Naive thymus-derived CD4-positive, alpha-beta T cell (primary cell): ENCODE measurements at regions of chr19 and their contacts with region 1.

Region 1: GRCh38 chr19:16283210-16284061 is 41.2 kb upstream of the KLF2 start:
- DNase-seq: peak in 8 of 9 donors; percentile 31 to 77 (median 68)
- ATAC-seq: peak; percentile 75
- H3K4me3 ChIP-seq: peak overlapping the region; percentile 53
- H3K4me3 Mint-ChIP-seq: peak overlapping the region; percentile 61 to 86 (median 84)
- H3K27ac ChIP-seq: peak overlapping the region; percentile 75
- H3K27ac Mint-ChIP-seq: peak overlapping the region; percentile 81 to 98 (median 94)
- H3K4me1 ChIP-seq: peaks cover 9 to 34% of the 10 kb centered on the region in 2 donors
- H3K4me1 Mint-ChIP-seq: peaks cover 31 to 60% (median 51%) of the 10 kb centered on the region in 7 donors
- H3K27me3 ChIP-seq: no peaks in the 10 kb centered on the region
- H3K27me3 Mint-ChIP-seq: peaks cover 0 to 48% (median 0%) of the 10 kb centered on the region in 5 donors

Region 2: GRCh38 chr19:16216744-16217670 is 66.4 kb before region 1 on chr19:
- CTCF ChIA-PET with region 1: no interaction called
- POLR2A ChIA-PET with region 1: no interaction called
- intact Hi-C with region 1: no loop called
- DNase-seq: peak in 7 of 9 donors; percentile 36 to 55 (median 50)
- ATAC-seq: peak; percentile 76
- H3K4me3 ChIP-seq: peak overlapping the region; percentile 34
- H3K4me3 Mint-ChIP-seq: peak overlapping the region; percentile 33 to 85 (median 78)
- H3K27ac ChIP-seq: peak overlapping the region; percentile 57
- H3K27ac Mint-ChIP-seq: peak overlapping the region; percentile 52 to 97 (median 92)
- H3K4me1 ChIP-seq: peaks cover 0 to 44% of the 10 kb centered on the region in 2 donors
- H3K4me1 Mint-ChIP-seq: peaks cover 29 to 68% (median 56%) of the 10 kb centered on the region in 7 donors
- H3K27me3 ChIP-seq: no peaks in the 10 kb centered on the region
- H3K27me3 Mint-ChIP-seq: no peaks in the 10 kb centered on the region

Region 3: GRCh38 chr19:16297575-16298178 is 14.2 kb after region 1 on chr19:
- CTCF ChIA-PET with region 1: no interaction called
- POLR2A ChIA-PET with region 1: interaction called, 5 read pairs
- intact Hi-C with region 1: loop called in 1 of 2 experiments (anchors 2 kb)
- DNase-seq: no peak
- ATAC-seq: no peak
- H3K4me3 ChIP-seq: no peak overlapping the region
- H3K4me3 Mint-ChIP-seq: no peak overlapping the region
- H3K27ac ChIP-seq: no peak overlapping the region
- H3K27ac Mint-ChIP-seq: no peak overlapping the region
- H3K4me1 ChIP-seq: no peaks in the 10 kb centered on the region
- H3K4me1 Mint-ChIP-seq: peaks cover 0 to 4% (median 0%) of the 10 kb centered on the region in 7 donors
- H3K27me3 ChIP-seq: no peaks in the 10 kb centered on the region
- H3K27me3 Mint-ChIP-seq: peaks cover 0 to 17% (median 0%) of the 10 kb centered on the region in 5 donors